PC-9 (cell line): ENCODE measurements at regions of chr9 and their contacts with region 1.

Region 1: GRCh38 chr9:78235756-78236538 is at the start of gene CEP78:
- DNase-seq: peak; percentile 90 to 94
- H3K4me3 ChIP-seq: peak within 1 kb of the TSS; percentile 94
- H3K27ac ChIP-seq: peak within 1 kb of the TSS; percentile 56
- H3K4me1 ChIP-seq: peaks cover 7% of the 10 kb centered on the region
- H3K27me3 ChIP-seq: no peaks in the 10 kb centered on the region
- CTCF ChIP-seq: no peak
- total RNA-seq, gene CEP78: 37.8 and 38.3 TPM in 2 replicates

Region 2: DNA sequence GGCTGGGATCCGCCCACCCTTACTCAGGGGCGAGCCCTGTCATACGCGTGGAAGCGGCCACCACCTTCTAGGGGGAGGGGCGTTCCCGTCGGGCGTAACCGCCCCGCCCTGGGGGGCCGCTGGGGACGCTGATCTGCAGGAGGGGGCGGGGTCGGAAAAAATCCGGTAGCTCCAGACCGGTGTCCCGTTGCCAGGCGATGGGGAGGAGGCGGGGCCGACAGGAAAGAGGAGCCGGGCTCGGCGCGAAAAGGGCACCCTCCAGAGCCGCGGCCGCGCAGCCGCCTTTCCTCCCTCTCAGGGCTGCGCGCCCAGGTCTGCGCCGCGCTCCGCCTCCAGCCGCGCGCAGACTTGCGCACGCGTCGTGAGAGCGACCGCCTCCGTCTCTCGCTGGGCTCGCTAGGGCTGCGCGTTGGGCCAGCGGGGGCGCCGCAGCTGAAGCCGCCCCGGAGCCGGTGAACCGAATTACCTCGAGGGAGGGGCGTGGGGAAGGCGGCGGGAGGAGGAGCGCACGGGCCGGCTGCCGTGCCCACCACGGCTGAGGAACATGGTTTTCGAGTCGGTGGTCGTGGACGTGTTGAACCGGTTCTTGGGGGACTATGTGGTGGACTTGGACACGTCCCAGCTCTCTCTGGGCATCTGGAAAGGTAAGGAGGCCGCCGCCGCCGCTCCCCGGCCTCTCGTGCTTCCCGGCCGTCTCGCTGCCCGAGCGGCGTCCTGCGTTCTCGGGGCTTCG is 1058.6 kb before region 1 on chr9 and contains the start of gene VPS13A:
- CTCF ChIA-PET with region 1: no interaction called
- POLR2A ChIA-PET with region 1: no interaction called
- intact Hi-C with region 1: loop called (anchors 2 kb)
- DNase-seq: peak; percentile 84 to 97
- H3K4me3 ChIP-seq: peak within 1 kb of the TSS; percentile 76
- H3K27ac ChIP-seq: peak within 1 kb of the TSS; percentile 44
- H3K4me1 ChIP-seq: peaks cover 31% of the 10 kb centered on the region
- H3K27me3 ChIP-seq: no peaks in the 10 kb centered on the region
- CTCF ChIP-seq: no peak; the same call in 1 of the 2 replicates
- total RNA-seq, gene VPS13A: 37.4 and 53.9 TPM in 2 replicates

Region 3: DNA sequence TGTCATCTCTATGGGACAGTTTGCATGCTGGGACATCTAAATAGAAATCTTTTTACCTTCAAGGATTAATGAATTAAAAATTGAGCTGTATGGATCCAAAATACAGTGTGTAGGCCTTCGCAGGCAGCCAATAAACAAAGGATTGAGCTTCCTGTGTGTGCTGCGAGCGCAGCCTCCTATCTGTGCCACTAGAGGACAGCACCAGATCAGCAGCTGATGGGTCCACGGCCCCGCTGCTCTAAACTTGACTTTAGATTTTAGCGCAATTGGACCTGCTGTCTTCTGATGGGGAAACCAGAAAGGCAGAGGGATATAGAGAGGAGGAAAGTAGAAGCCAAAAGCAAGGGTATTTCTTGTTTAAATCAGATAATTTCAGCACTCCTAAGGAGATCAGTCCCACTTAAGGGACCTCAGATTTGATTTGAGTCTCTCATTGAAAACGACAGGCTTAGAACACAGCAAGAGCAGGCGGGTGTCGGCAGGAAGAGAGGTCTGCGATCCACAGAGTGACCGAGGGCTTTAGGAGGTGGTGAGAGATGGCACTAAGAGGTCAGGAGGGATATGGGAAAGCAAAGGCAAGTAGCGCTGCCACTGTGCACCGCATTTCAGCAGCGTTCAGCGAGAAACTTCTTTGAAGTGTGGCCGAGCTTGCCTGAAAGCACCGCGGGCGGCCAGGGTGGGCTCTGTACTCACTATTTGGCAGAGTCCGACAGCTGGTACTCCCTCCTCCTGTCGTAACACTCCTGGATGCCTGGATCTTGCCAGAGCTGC is 802.1 kb before region 1 on chr9:
- CTCF ChIA-PET with region 1: no interaction called
- POLR2A ChIA-PET with region 1: no interaction called
- intact Hi-C with region 1: no loop called
- DNase-seq: peak in 1 of 2 experiments; percentile 51
- H3K4me3 ChIP-seq: no peak overlapping the region
- H3K27ac ChIP-seq: no peak overlapping the region
- H3K4me1 ChIP-seq: no peaks in the 10 kb centered on the region
- H3K27me3 ChIP-seq: no peaks in the 10 kb centered on the region
- CTCF ChIP-seq: peak; percentile 92